CD8-positive, alpha-beta T cell (primary cell): ENCODE measurements at regions of chr16 and their contacts with region 1.

Region 1: GRCh38 chr16:46973207-46973995 is at the start of gene DNAJA2:
- DNase-seq: peak; percentile 84 to 96 (median 93)
- ATAC-seq: peak; percentile 93
- H3K4me3 ChIP-seq: peak within 1 kb of the TSS; percentile 87 to 89
- H3K4me3 Mint-ChIP-seq: peak within 1 kb of the TSS; percentile 92
- H3K27ac ChIP-seq: peak within 1 kb of the TSS; percentile 96 to 98
- H3K27ac Mint-ChIP-seq: peak within 1 kb of the TSS; percentile 100
- H3K4me1 ChIP-seq: peaks cover 45% of the 10 kb centered on the region
- H3K4me1 Mint-ChIP-seq: peaks cover 53% of the 10 kb centered on the region
- H3K27me3 ChIP-seq: no peaks in the 10 kb centered on the region
- H3K27me3 Mint-ChIP-seq: no peaks in the 10 kb centered on the region
- CTCF ChIP-seq: no peak
- total RNA-seq, gene DNAJA2: 82.8 to 83.1 TPM

Region 2: DNA sequence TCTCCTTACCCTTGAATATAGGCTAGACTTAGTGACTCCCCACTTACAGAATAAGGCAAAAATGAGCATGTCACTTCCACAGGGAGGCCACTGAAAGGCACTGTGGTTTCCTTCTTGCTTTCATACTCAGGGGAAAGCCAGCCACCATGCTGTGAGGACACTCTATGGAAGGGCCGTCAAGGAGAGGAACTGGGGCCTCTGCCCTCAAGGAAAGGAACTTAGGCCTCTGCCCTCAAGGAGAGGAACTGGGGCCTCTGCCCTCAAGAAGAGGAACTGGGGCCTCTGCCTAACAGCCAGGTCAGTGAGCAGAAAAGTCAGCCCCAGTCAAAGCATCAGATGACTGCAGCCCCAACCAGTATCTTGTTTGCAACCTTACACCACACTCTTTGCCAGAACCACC is 314.5 kb before region 1 on chr16:
- CTCF ChIA-PET with region 1: no interaction called
- POLR2A ChIA-PET with region 1: no interaction called
- intact Hi-C with region 1: no loop called
- DNase-seq: peak in 1 of 9 experiments; percentile 27
- ATAC-seq: peak; percentile 23
- H3K4me3 ChIP-seq: no peak overlapping the region
- H3K4me3 Mint-ChIP-seq: no peak overlapping the region
- H3K27ac ChIP-seq: no peak overlapping the region
- H3K27ac Mint-ChIP-seq: peak overlapping the region; percentile 24
- H3K4me1 ChIP-seq: no peaks in the 10 kb centered on the region
- H3K4me1 Mint-ChIP-seq: peaks cover 6% of the 10 kb centered on the region
- H3K27me3 ChIP-seq: no peaks in the 10 kb centered on the region
- H3K27me3 Mint-ChIP-seq: no peaks in the 10 kb centered on the region
- CTCF ChIP-seq: no peak

Region 3: DNA sequence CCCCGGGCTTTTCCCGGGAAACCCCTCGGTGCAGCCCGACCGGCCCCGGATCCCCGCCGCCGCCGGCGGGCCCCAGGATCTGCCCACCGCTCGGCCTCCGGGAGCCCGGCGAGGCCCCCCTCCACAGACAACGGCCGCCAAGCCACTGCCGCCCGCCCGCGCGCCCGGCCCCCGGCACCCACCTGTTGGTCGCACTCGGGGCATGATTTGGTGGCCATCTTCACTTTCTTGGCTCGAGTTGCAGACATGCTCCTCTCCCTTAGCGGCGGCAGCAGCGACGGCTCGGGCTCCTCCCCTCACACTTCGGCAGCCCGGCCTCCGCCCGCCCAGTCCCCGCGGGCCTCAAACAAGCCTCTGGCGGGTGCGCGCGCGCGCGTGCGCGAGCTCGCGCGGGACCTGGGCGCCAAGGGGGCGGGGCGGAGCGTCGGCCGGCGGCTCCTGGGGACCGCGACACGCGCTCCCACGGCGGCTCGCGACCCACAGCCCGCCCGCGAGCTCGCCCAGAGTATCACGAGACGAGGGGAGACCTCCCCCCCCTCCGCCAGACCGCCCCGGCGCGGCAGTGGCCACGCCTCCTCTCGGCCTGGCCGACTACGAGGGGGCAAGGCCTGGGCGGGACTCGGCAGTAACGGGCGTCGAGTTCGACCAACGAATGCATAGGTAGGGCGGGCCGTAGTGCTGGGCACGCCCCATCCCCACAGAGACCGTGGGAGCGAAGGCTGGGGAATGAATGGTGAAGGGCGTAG is 142.3 kb before region 1 on chr16 and contains the start of gene C16orf87:
- CTCF ChIA-PET with region 1: no interaction called
- POLR2A ChIA-PET with region 1: interaction called, 7 read pairs
- intact Hi-C with region 1: loop called (anchors 1 kb)
- DNase-seq: peak; percentile 85 to 96 (median 90)
- ATAC-seq: peak; percentile 92
- H3K4me3 ChIP-seq: peak within 1 kb of the TSS; percentile 61 to 74
- H3K4me3 Mint-ChIP-seq: peak within 1 kb of the TSS; percentile 94
- H3K27ac ChIP-seq: peak within 1 kb of the TSS; percentile 62 to 73
- H3K27ac Mint-ChIP-seq: peak within 1 kb of the TSS; percentile 96
- H3K4me1 ChIP-seq: peaks cover 9% of the 10 kb centered on the region
- H3K4me1 Mint-ChIP-seq: peaks cover 27% of the 10 kb centered on the region
- H3K27me3 ChIP-seq: no peaks in the 10 kb centered on the region
- H3K27me3 Mint-ChIP-seq: no peaks in the 10 kb centered on the region
- CTCF ChIP-seq: no peak
- total RNA-seq, gene C16orf87: 13.9 to 14.0 TPM

Region 4: DNA sequence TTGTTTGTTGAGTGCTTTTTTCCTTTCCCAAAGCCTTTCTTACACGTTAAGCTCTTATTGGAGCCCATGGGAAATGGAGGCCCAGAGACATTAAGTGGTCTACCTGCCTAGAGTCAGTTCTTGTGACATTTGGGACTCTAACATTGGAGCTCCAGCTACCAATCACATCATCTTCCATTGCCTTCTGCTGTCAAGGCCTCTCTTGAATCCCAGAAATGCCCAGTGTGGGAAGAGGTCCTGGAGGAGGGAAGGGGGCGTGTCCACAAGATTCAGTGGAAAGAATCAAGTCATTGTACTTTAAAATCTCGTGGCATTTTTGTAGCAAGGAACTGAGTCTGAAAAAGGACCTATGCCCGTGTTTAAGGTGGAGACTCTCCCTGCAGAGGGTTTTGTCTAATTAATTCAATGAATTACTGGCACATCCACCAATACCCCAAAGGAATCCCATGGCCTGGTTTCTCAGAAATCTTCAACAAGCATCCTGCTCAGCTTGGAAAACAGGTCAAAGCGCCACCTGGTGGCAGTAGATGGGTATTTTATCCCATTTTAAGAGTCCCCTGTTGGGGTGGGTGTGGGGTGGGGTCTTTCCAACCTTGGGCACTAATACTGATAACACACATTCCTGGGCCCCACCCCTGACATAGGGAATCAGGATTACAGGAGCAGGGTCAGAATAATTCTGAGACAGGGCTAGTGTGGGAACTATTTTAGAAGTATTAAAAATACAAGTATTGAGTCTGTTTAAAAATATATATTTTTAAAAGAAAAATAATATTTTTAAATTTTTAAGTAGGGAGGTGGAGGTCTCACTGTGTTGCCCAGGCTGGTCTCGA is 64.6 kb before region 1 on chr16:
- CTCF ChIA-PET with region 1: no interaction called
- POLR2A ChIA-PET with region 1: no interaction called
- intact Hi-C with region 1: no loop called
- DNase-seq: peak; percentile 29 to 74 (median 64)
- ATAC-seq: peak; percentile 26
- H3K4me3 ChIP-seq: no peak overlapping the region
- H3K4me3 Mint-ChIP-seq: no peak overlapping the region
- H3K27ac ChIP-seq: no peak overlapping the region
- H3K27ac Mint-ChIP-seq: no peak overlapping the region
- H3K4me1 ChIP-seq: no peaks in the 10 kb centered on the region
- H3K4me1 Mint-ChIP-seq: no peaks in the 10 kb centered on the region
- H3K27me3 ChIP-seq: no peaks in the 10 kb centered on the region
- H3K27me3 Mint-ChIP-seq: no peaks in the 10 kb centered on the region
- CTCF ChIP-seq: peak; percentile 82

Region 5: GRCh38 chr16:47037746-47038458 is 64.5 kb after region 1 on chr16:
- CTCF ChIA-PET with region 1: interaction called, 6 read pairs
- POLR2A ChIA-PET with region 1: interaction called, 10 read pairs
- intact Hi-C with region 1: loop called (anchors 2 kb)
- DNase-seq: peak; percentile 80 to 95 (median 88)
- ATAC-seq: peak; percentile 98
- H3K4me3 ChIP-seq: peak overlapping the region; percentile 65 to 72
- H3K4me3 Mint-ChIP-seq: peak overlapping the region; percentile 79
- H3K27ac ChIP-seq: no peak overlapping the region
- H3K27ac Mint-ChIP-seq: no peak overlapping the region
- H3K4me1 ChIP-seq: peaks cover 7% of the 10 kb centered on the region
- H3K4me1 Mint-ChIP-seq: peaks cover 5% of the 10 kb centered on the region
- H3K27me3 ChIP-seq: peaks cover 0 to 12% of the 10 kb centered on the region in 2 experiments
- H3K27me3 Mint-ChIP-seq: peaks cover 3% of the 10 kb centered on the region
- CTCF ChIP-seq: peak; percentile 88

Region 6: GRCh38 chr16:47134550-47134949 is 161.1 kb after region 1 on chr16:
- CTCF ChIA-PET with region 1: no interaction called
- POLR2A ChIA-PET with region 1: no interaction called
- intact Hi-C with region 1: no loop called
- DNase-seq: no peak
- ATAC-seq: no peak
- H3K4me3 ChIP-seq: no peak overlapping the region
- H3K4me3 Mint-ChIP-seq: no peak overlapping the region
- H3K27ac ChIP-seq: no peak overlapping the region
- H3K27ac Mint-ChIP-seq: no peak overlapping the region
- H3K4me1 ChIP-seq: no peaks in the 10 kb centered on the region
- H3K4me1 Mint-ChIP-seq: no peaks in the 10 kb centered on the region
- H3K27me3 ChIP-seq: no peaks in the 10 kb centered on the region
- H3K27me3 Mint-ChIP-seq: peaks cover 2% of the 10 kb centered on the region
- CTCF ChIP-seq: no peak

Region 7: GRCh38 chr16:48244080-48244862 is 1270.9 kb after region 1 on chr16 and contains the start of gene LONP2:
- CTCF ChIA-PET with region 1: no interaction called
- POLR2A ChIA-PET with region 1: no interaction called
- intact Hi-C with region 1: loop called (anchors 2 to 5 kb)
- DNase-seq: peak; percentile 82 to 93 (median 89)
- ATAC-seq: peak; percentile 94
- H3K4me3 ChIP-seq: peak within 1 kb of the TSS; percentile 66 to 88
- H3K4me3 Mint-ChIP-seq: peak within 1 kb of the TSS; percentile 90
- H3K27ac ChIP-seq: peak within 1 kb of the TSS; percentile 75 to 83
- H3K27ac Mint-ChIP-seq: peak within 1 kb of the TSS; percentile 95
- H3K4me1 ChIP-seq: peaks cover 38% of the 10 kb centered on the region
- H3K4me1 Mint-ChIP-seq: peaks cover 50% of the 10 kb centered on the region
- H3K27me3 ChIP-seq: no peaks in the 10 kb centered on the region
- H3K27me3 Mint-ChIP-seq: no peaks in the 10 kb centered on the region
- CTCF ChIP-seq: no peak
- total RNA-seq, gene LONP2: 71.8 to 72.1 TPM